Cardiac septum (tissue), 1 donor: ENCODE measurements at regions of chr6 and their contacts with region 1.

Region 1: DNA sequence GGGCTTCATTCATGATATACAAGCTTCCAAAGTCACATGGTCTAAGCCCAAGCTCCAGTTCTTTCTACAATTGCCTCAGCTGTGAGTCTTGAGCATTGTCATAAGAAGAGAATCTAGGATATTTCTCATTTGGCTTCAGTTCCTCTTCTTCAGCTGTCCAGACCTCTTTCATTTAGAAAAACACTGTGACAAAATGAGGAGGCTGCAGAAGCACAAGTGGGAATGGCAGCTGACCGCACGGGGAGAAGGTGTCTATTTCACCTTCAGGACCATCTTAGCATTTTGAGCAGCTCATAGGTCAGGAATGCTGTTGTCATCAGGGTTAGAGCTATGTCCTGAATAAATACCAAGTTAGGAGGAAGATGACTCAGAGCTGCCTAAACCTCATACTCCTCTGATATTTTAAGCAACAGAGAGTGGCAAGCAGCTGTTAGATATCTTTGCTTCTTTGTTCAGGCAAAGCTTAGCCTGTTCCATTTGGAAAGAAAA is 390.1 kb upstream of the CITED2 start:
- DNase-seq: no peak

Region 2: GRCh38 chr6:140078561-140079125 is 314.1 kb after region 1 on chr6:
- intact Hi-C with region 1: loop called (anchors 10 kb)
- DNase-seq: no peak